Activated CD8-positive, alpha-beta memory T cell treated with anti-CD3 and anti-CD28 coated beads, Interleukin-2, amount 10 ng/mL, durations not matched to agents 7 days and 5 days (primary cell): ENCODE measurements at regions of chr19 and their contacts with region 1.

Region 1: DNA sequence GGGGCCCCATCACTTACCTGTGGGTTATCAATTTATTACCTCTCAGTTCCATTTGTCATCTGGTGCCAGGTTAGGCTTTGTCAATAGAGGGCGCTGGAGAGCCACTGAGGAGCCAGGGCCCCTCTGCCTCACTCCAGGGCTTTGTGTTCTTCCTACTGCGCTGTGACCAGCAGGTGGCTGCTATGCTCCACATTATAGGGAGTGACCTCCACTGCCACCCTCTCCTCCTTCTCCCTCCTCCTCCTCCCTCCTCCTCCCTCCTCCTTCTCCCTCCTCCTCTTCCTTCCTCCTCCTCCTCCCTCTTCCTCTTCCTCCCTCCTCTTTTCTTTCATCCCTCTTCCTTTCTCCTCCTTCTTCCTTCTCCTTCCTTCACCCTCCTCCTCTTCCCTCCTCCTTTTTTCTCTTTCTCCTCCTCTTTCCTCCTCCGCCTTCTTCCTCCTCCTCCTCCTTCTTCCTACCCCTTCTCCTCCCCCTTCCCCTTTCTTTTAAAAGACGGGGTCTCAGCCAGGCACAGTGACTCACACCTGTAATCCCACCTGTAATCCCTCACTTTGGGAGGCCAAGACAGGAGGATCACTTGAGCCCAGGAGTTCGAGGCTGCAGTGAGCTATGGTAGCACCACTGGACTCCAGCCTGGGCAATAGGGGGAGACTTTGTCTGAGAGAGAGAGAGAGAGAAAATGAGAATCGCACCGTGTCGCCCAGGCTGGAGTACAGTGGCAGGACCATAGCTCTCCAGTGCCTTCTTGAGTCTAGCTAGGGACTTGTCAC is 10.3 kb upstream of the ZBTB32 start:
- DNase-seq: peak; percentile 96
- ATAC-seq: peak; percentile 100
- H3K4me3 Mint-ChIP-seq: no peak overlapping the region
- H3K27ac Mint-ChIP-seq: peak overlapping the region; percentile 61
- H3K4me1 Mint-ChIP-seq: peaks cover 13% of the 10 kb centered on the region
- H3K27me3 Mint-ChIP-seq: peaks cover 4% of the 10 kb centered on the region

Region 2: GRCh38 chr19:35716801-35717666 is 23.0 kb after region 1 on chr19:
- CTCF ChIA-PET with region 1: interaction called, 254 read pairs
- DNase-seq: peak; percentile 98
- ATAC-seq: peak; percentile 68
- H3K4me3 Mint-ChIP-seq: peak overlapping the region; percentile 89
- H3K27ac Mint-ChIP-seq: peak overlapping the region; percentile 96
- H3K4me1 Mint-ChIP-seq: peaks cover 39% of the 10 kb centered on the region
- H3K27me3 Mint-ChIP-seq: no peaks in the 10 kb centered on the region

Region 3: DNA sequence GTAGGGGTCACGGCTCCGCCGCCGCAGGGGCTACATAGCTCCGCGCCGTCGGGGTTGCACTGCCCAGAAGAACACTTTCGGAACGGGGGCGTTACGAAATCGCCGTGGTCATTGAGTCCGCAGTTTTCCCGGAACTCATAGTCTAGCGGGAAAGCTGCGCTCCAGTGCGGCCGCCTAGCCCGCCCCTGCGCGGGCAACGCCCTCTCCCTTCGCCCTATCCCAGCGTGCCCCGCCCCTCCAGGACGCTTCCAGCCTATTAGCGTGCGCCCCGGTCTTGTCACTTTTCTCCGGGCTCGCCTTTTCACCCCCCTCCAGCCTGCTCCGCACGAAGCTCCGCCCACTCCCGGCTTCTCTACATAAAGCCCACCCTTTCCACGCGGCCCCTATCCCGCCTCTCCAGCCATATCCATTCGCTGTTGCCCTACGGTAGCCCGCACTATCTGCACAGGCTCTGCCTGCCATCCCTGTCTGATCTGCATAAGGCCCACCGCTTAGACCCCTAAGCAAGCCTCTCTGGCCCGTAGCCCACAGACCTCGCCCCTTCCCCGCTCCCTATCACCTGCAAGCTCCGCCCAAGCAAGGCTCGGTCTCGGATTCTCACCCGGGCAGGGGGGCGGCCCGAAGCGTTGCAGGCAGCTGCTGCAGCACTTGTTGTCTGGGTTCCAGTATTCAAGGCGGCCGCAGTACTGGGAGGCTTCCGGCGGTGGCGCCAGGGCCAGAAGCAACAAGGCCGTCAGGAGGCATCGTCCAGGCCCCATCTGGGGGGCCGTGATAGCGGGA is 46.6 kb after region 1 on chr19:
- CTCF ChIA-PET with region 1: interaction called, 12 read pairs
- DNase-seq: peak; percentile 99
- ATAC-seq: peak; percentile 72
- H3K4me3 Mint-ChIP-seq: peak overlapping the region; percentile 84
- H3K27ac Mint-ChIP-seq: peak overlapping the region; percentile 96
- H3K4me1 Mint-ChIP-seq: peaks cover 37% of the 10 kb centered on the region
- H3K27me3 Mint-ChIP-seq: no peaks in the 10 kb centered on the region

Region 4: DNA sequence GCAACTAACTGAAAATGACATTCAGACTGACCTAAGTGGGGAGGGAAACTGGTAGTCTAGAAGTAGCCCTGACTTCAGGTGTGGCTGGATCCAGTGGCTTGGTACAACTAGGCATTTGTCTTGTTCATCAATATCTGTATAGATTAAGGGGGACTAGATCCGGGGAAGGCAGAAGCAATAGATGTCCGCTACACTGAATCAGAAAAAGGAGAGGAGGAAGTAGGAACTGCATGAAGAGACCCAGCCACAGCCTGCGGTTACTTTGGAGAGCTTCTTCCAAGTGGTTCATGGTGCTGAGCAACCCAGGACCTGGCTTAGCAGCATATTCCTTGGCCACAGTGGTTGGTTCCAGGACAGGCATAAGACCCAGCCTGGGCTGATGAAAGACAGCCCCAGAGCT is 128.6 kb after region 1 on chr19:
- CTCF ChIA-PET with region 1: interaction called, 31 read pairs
- DNase-seq: no peak
- ATAC-seq: no peak
- H3K4me3 Mint-ChIP-seq: no peak overlapping the region
- H3K27ac Mint-ChIP-seq: no peak overlapping the region
- H3K4me1 Mint-ChIP-seq: peaks cover 5% of the 10 kb centered on the region
- H3K27me3 Mint-ChIP-seq: peaks cover 18% of the 10 kb centered on the region